Activated CD4-positive, alpha-beta T cell treated with anti-CD3 and anti-CD28 coated beads, Interleukin-2, amount 10 ng/mL, durations not matched to agents 24 days and 14 days (primary cell): ENCODE measurements at regions of chr14 and their contacts with region 1.

Region 1: DNA sequence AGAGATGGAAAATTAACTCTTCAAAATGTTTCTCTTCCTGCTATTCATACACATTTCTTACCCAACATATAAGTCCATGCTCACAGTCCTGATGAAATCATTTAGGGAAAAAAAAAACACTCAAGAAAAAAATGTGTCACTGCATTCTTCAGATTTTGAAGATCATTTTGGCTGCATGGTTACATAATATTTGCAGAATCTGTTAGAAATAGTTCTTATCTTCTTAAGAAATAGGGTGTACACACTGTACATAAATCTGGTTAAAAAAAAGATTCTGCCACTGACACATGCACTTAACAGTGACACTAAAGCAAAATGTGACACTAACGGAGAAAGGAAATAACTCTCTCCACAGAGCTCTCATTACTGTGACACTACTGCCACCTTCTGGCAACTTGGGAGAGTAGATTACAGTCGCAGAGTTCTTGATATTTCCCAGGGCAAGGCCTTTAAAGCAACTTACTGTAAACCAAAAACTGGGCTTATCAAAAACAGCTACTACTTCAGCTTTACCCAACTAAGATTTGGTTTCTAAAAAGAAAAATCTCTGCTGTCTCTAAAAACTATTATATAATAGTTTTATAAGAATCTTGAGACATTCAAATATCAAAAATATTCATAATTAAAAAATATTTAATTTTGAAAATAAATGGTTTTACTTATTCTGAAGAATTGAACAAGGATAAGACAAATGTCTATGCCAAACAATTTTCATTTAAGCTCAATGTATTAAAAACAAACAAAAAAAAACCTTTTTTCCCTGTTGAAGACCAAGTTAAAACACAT is 65.0 kb downstream of the SETD3 start:
- DNase-seq: peak; percentile 91
- H3K4me3 Mint-ChIP-seq: no peak overlapping the region
- H3K27ac Mint-ChIP-seq: peak overlapping the region; percentile 13
- H3K4me1 Mint-ChIP-seq: peaks cover 20% of the 10 kb centered on the region
- H3K27me3 Mint-ChIP-seq: no peaks in the 10 kb centered on the region

Region 2: DNA sequence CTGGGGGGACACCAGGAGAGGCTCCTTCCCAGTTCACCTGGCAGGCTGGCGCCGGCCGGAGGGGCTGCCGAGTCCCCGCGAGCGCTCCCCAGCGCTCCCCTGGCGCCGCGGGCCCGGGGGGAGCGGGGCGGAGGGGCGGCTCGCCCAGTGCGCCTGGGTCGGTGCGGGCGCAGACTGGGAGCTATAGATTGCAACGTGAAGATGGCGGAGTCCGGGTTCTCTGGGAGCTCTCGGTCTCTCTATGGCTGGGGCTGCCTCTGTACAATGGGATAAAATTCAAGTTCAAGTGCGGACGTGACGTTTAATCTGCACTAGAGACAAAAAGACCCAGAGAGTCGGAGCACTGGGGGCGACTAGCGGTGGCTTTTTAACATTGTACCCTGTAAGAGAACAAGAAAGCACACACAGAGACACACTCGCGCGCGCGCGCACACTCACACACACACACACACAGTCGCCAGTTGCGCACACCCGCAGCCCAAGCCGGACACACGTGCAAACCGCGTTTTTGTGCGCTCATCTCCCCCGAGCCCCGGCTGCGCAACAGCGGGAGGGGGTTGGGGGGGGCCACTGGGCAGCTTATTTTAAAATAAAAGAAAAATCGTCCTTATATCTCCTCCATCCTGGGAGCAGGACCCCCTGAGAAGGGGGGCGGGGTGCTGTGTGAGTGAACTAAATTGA is 143.6 kb before region 1 on chr14 and contains the start of gene BCL11B:
- intact Hi-C with region 1: loop called (anchors 5 kb)
- DNase-seq: peak; percentile 96
- H3K4me3 Mint-ChIP-seq: peak within 1 kb of the TSS; percentile 91
- H3K27ac Mint-ChIP-seq: peak within 1 kb of the TSS; percentile 95
- H3K4me1 Mint-ChIP-seq: peaks cover 42% of the 10 kb centered on the region
- H3K27me3 Mint-ChIP-seq: peaks cover 13% of the 10 kb centered on the region
- total RNA-seq, gene BCL11B: 48.2 and 48.5 TPM in 2 replicates

Region 3: GRCh38 chr14:99320105-99320572 is 95.5 kb before region 1 on chr14:
- intact Hi-C with region 1: loop called (anchors 1 kb)
- DNase-seq: peak; percentile 92
- H3K4me3 Mint-ChIP-seq: peak overlapping the region; percentile 50
- H3K27ac Mint-ChIP-seq: no peak overlapping the region
- H3K4me1 Mint-ChIP-seq: peaks cover 10% of the 10 kb centered on the region
- H3K27me3 Mint-ChIP-seq: no peaks in the 10 kb centered on the region

Region 4: DNA sequence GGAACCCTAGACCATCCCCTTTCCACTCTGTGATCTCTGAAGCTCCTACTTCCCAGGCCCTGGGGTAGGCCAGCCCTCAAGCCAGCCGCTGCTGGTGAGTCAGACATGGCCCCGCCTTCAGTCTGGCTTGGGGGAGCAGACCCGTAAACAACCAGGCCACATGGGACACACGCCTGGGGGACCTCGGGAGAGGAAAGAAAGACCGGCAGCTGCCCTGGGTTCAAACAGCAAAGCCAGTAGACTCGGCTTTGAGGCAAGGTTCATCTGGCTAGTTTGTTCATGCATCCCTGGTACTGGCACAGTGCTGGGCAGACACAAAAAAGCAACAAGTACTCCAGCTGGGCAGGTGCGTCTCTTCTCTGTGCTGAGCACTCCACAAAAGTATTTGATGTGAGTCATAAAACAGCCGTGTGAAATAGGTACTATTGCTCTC is 36.9 kb before region 1 on chr14:
- intact Hi-C with region 1: no loop called
- DNase-seq: no peak
- H3K4me3 Mint-ChIP-seq: no peak overlapping the region
- H3K27ac Mint-ChIP-seq: no peak overlapping the region
- H3K4me1 Mint-ChIP-seq: no peaks in the 10 kb centered on the region
- H3K27me3 Mint-ChIP-seq: peaks cover 2% of the 10 kb centered on the region

Region 5: GRCh38 chr14:99393047-99393655 is 22.5 kb before region 1 on chr14:
- intact Hi-C with region 1: loop called (anchors 1 kb)
- DNase-seq: peak; percentile 75
- H3K4me3 Mint-ChIP-seq: no peak overlapping the region
- H3K27ac Mint-ChIP-seq: no peak overlapping the region
- H3K4me1 Mint-ChIP-seq: peaks cover 5% of the 10 kb centered on the region
- H3K27me3 Mint-ChIP-seq: no peaks in the 10 kb centered on the region